Heart right ventricle (tissue), 16 donors: ENCODE measurements at regions of chr1 and their contacts with region 1.

Region 1: GRCh38 chr1:33176362-33176850 is 5.4 kb downstream of the TRIM62 start:
- DNase-seq: no peak
- ATAC-seq: no peak
- H3K4me3 ChIP-seq: no peak overlapping the region
- H3K27ac ChIP-seq: peak overlapping the region in 1 of 10 donors; percentile 19
- H3K4me1 ChIP-seq: peaks cover 5 to 35% (median 15%) of the 10 kb centered on the region in 9 donors
- H3K27me3 ChIP-seq: no peaks in the 10 kb centered on the region
- CTCF ChIP-seq: no peak

Region 2: DNA sequence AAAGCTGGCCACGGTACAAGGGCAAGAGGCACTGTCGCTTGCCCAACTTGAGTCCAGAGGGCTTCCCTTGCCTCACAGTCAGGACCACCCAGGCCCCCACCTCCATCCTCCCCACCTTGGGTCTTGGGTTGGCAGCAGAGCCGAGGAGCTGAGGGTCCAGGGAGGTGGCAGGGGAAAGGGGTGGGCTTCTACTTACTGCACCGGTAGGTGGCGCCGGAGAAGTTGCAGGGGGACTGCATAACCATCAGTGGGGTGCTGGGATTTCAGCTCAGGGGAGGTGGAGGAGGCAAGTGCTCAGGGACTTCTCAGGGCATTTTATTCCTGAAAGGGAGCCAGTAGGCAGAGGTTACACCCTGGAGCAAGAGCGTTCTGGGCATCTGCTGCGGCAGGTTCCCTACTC is 38.6 kb before region 1 on chr1:
- intact Hi-C with region 1: loop called in 1 of 10 experiments (anchors 5 kb)
- DNase-seq: peak; percentile 30 to 58
- ATAC-seq: peak in 4 of 8 donors; percentile 36 to 61 (median 50)
- H3K4me3 ChIP-seq: no peak overlapping the region
- H3K27ac ChIP-seq: no peak overlapping the region
- H3K4me1 ChIP-seq: peaks cover 0 to 14% (median 2%) of the 10 kb centered on the region in 9 donors
- H3K27me3 ChIP-seq: no peaks in the 10 kb centered on the region
- CTCF ChIP-seq: peak in 8 of 9 donors; percentile 36 to 67 (median 58)

Region 3: DNA sequence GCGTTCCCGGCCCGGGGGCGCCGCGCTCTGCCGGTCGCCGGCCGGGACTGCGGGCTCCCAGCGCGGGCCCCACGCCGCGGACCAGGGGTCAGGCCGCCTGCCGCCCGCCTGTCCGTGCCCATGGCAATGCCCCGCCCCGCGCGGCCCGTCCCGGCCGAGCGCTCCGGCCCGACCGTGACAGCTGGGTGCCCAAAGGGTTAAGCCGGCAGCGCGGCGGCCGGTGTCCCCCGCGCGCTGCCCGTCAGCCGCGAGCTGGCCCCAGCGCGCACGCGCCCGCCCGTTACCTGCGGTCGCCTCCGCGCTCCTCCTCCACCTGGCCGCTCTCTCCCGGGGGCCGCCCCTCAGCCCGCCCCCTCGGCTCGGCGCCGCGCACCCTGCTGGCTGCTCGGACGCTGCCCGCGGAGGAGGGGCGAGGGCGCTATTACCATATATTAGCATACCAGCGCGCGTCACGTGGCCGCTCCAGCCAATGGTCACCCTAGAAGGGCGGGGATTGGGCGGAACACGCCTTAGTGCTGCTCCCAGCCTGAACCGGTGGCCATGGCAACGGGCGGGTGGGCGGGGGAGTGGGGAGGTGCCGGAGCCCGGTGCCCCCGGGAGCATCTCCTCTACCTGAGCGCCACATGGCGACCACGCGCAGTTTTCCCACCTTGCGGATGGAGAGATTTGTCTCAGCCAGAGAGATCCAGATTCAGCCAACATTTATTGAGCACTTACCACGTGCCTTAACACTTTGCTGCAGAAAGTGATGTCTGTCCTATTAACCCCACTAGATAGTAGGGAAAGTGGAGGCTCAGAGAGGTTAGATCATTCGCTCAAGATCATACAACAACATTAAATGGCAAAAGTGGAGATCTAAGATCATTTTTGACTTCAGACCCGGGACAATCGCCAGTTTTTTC is 254.5 kb after region 1 on chr1 and contains the start of gene PHC2:
- intact Hi-C with region 1: no loop called
- DNase-seq: peak; percentile 97 to 98
- ATAC-seq: peak; percentile 96 to 98 (median 97)
- H3K4me3 ChIP-seq: peak within 1 kb of the TSS; percentile 69 to 95 (median 76)
- H3K27ac ChIP-seq: peak within 1 kb of the TSS; percentile 62 to 89 (median 86)
- H3K4me1 ChIP-seq: peaks cover 0 to 79% (median 50%) of the 10 kb centered on the region in 9 donors
- H3K27me3 ChIP-seq: no peaks in the 10 kb centered on the region
- CTCF ChIP-seq: peak in 8 of 9 donors; percentile 32 to 66 (median 42)
- total RNA-seq, gene PHC2: 96.7 to 136 (median 102) TPM